ENCODE measurements at regions of chr3 and their contacts with region 1.

Region 1: DNA sequence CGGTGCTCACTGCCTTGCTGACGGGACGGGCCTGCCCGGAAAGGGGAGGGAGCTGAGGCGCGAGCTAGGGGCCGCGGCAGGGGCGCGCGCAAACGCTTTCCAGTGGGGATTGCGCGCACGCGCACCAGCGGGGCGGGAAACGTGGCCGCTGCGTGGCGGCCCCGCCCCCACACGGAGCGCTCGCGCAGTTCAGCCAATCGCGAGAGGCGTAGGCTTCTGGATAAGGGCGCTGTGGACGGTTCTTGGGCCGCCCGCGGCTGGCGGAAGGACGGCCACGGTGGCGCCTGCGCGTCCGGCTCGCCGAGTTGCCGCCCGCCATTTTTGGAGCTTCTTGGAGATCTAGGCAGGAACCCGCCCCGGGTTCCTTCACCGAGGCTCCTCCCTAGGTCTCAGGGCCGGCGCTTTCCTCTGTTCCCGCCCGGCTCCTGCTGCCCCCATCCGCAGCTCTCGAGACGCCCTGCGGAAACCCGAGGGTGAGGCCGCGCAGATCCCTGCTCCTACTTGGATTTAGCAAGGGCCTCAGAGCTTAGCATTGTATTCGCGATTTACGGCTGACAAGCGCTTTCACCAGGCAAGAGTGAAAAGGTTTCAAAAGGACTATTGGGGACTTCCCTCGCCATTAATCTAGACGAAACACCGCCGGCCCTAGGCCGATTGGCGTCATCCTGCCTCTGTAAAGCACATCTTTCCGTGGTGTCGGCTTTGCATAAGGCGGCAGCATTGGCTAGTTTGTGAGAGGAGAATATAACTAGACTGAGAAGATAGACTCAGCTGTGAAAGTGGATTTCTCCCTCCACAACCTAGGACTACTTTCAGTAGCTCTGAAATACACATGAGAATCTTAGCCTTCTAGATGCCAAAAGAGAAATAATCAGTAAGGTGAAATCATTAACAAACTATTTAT is 496 bp upstream of the STAG1 start:
- DNase-seq: peak; percentile 96
- H3K4me3 ChIP-seq: peak overlapping the region; percentile 66 to 69
- H3K27ac ChIP-seq: peak overlapping the region; percentile 98
- H3K4me1 ChIP-seq: peaks cover 17 to 24% of the 10 kb centered on the region in 2 experiments; a peak in 3 of 4 replicates
- H3K27me3 ChIP-seq: no peaks in the 10 kb centered on the region
- CTCF ChIP-seq: peak; percentile 38
- EP300 ChIP-seq: peak in 1 of 2 experiments; percentile 9; a peak in 1 of 4 replicates
- RAD21 ChIP-seq: peak; percentile 59

Region 2: DNA sequence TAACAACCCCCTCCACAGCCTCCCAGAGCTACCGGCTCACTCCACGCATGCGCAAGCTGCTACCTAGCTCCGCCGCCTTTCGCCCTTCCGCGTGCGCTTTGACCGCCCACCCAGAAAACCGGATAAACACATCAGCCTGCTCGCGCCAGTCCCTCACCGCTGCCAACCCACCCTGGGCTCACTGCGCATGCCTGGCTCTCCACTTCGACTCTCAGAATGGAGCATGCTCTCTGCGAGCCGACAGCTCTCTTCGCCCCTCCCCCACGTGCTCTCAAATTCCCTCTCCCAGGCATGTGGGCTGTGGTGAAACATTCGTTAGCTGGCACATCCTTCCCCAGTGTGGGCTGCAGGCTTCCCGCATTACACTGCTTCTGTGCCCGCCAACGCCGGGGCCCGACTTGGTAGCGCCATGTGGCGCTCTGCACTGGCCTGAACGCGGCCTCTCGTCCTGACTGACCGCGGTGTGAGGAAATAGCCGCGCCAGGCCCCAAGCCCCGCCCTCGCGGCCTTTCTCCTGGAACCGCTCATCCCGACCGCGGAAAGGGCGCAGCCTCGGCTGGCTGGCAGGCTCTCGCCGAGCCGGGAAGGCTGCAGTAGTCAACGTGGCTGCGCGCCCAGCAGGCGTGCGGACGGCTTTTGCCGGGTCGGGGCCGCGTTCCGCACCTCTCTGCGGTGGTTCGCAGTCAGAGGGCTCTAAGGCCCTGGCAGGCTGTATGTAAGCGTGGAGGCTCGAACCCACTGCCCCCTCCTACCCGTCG is 556.1 kb before region 1 on chr3:
- CTCF ChIA-PET with region 1: interaction called, 13 read pairs
- POLR2A ChIA-PET with region 1: interaction called, 21 read pairs
- DNase-seq: peak; percentile 97
- H3K4me3 ChIP-seq: peak overlapping the region; percentile 82 to 83
- H3K27ac ChIP-seq: peak overlapping the region; percentile 98 to 99
- H3K4me1 ChIP-seq: peaks cover 8 to 14% of the 10 kb centered on the region in 2 experiments; a peak in 3 of 4 replicates
- H3K27me3 ChIP-seq: no peaks in the 10 kb centered on the region
- CTCF ChIP-seq: no peak
- EP300 ChIP-seq: peak in 1 of 2 experiments; percentile 27; a peak in 1 of 4 replicates
- RAD21 ChIP-seq: no peak; the same call in 1 of the 2 replicates

Region 3: GRCh38 chr3:136385457-136385856 is 367.2 kb before region 1 on chr3:
- CTCF ChIA-PET with region 1: interaction called, 127 read pairs
- POLR2A ChIA-PET with region 1: no interaction called
- DNase-seq: no peak
- H3K4me3 ChIP-seq: no peak overlapping the region
- H3K27ac ChIP-seq: no peak overlapping the region
- H3K4me1 ChIP-seq: no peaks in the 10 kb centered on the region
- H3K27me3 ChIP-seq: no peaks in the 10 kb centered on the region
- CTCF ChIP-seq: no peak
- EP300 ChIP-seq: no peak
- RAD21 ChIP-seq: no peak

Region 4: DNA sequence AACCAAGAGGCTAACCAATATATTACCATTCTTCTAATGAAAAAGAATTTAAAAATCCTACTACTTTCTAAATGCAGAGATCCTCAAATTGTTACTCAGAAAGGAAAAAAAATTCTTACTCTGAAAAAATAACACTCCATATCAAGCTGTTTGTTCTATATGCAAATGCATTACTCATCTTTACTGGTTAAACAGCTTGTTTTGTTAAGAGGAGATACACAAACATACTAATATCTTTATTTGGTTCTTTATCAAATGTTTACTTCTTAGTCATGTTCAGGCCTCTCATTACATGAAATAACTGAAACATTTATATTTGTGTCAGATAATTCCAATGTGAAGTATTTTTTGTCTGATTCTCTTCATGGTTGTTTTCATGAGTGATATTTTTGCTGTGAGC is 355.8 kb before region 1 on chr3:
- CTCF ChIA-PET with region 1: interaction called, 127 read pairs
- POLR2A ChIA-PET with region 1: interaction called, 33 read pairs
- DNase-seq: no peak
- H3K4me3 ChIP-seq: no peak overlapping the region
- H3K27ac ChIP-seq: no peak overlapping the region
- H3K4me1 ChIP-seq: no peaks in the 10 kb centered on the region
- H3K27me3 ChIP-seq: no peaks in the 10 kb centered on the region
- CTCF ChIP-seq: no peak
- EP300 ChIP-seq: no peak
- RAD21 ChIP-seq: no peak

Region 5: DNA sequence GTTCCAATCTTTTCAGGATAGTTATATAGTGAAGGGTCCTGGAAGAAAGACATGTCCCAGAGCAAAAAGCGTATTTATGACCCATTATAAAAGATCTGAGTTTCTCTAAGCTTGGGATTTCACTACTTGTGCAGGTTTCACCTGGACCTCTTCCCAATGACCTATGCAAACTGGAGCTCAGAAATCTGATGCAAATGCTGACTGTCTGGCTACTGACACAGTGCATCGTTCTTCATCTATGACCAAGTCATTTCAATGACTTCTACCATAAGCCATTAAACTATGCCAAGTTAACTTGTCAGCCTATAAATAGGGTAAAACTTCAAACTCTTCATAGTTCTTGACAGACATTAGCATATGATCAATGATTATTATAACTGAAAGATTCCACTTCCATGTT is 11.6 kb before region 1 on chr3:
- CTCF ChIA-PET with region 1: interaction called, 11 read pairs
- POLR2A ChIA-PET with region 1: interaction called, 4 read pairs
- DNase-seq: no peak
- H3K4me3 ChIP-seq: no peak overlapping the region
- H3K27ac ChIP-seq: no peak overlapping the region
- H3K4me1 ChIP-seq: no peaks in the 10 kb centered on the region
- H3K27me3 ChIP-seq: no peaks in the 10 kb centered on the region
- CTCF ChIP-seq: no peak
- EP300 ChIP-seq: no peak
- RAD21 ChIP-seq: no peak

Region 6: GRCh38 chr3:137013955-137014688 is 261.4 kb after region 1 on chr3:
- CTCF ChIA-PET with region 1: interaction called, 85 read pairs
- POLR2A ChIA-PET with region 1: interaction called, 23 read pairs
- DNase-seq: peak; percentile 84
- H3K4me3 ChIP-seq: peak overlapping the region in 1 of 2 experiments; percentile 42; a peak in 2 of 4 replicates
- H3K27ac ChIP-seq: no peak overlapping the region
- H3K4me1 ChIP-seq: peaks cover 5 to 7% of the 10 kb centered on the region in 2 experiments; a peak in 2 of 4 replicates
- H3K27me3 ChIP-seq: no peaks in the 10 kb centered on the region
- CTCF ChIP-seq: peak; percentile 86
- EP300 ChIP-seq: no peak
- RAD21 ChIP-seq: peak; percentile 99